ENCODE measurements at regions of chr20 and their contacts with region 1.

Region 1: DNA sequence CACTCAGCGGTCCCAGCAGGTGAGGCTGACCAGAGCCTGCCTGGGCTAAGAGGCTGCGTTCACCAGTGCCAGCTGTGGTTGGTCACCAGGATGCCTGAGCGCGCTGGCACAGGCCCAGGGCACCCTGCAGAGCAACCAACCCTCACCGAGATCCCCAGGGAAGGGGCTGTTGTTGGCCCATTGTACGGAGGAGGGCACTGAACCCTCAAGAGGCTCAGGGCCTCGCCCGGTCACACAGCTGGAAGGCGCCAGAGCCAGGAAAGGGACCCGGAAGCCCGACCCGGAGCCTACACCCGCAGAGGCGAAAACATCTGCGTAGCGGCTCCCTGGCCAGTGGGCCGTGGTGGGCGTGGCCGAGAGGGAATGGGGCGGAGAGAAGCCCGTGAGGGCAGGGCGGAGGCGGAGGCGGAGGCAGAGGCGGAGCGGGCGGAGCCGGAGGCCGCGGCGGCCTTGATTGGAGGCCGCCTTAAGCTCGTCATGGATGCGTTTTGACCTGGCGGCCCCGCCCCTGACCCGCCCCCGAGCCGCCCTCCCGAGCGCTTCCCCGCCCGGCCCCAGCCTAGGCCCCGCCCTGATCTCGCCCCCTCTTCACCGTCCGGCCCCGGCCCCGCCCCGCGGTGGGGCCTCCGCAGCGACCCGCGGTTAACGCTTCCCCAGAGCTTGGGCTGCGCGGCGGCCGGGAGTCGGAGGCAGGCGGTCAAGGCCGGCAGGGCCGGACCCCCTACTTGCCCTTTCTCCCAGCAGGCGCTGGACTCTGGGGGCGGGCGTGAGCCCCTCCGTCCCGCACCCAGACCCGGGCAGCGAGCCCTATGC is 2.2 kb upstream of the MRGBP start:
- DNase-seq: peak; percentile 96
- H3K4me3 Mint-ChIP-seq: peak overlapping the region; percentile 81
- H3K27ac Mint-ChIP-seq: peak overlapping the region; percentile 91
- H3K4me1 Mint-ChIP-seq: peaks cover 15% of the 10 kb centered on the region
- H3K27me3 Mint-ChIP-seq: peaks cover 9% of the 10 kb centered on the region

Region 2: GRCh38 chr20:62237801-62238571 is 556.1 kb before region 1 on chr20 and contains the start of gene OSBPL2:
- intact Hi-C with region 1: loop called (anchors 10 kb)
- DNase-seq: peak; percentile 100
- H3K4me3 Mint-ChIP-seq: peak within 1 kb of the TSS; percentile 85
- H3K27ac Mint-ChIP-seq: peak within 1 kb of the TSS; percentile 58
- H3K4me1 Mint-ChIP-seq: peaks cover 16% of the 10 kb centered on the region
- H3K27me3 Mint-ChIP-seq: no peaks in the 10 kb centered on the region
- total RNA-seq, gene OSBPL2: 27.0 and 31.6 TPM in 2 replicates

Region 3: GRCh38 chr20:62500237-62500864 is 293.8 kb before region 1 on chr20:
- intact Hi-C with region 1: loop called (anchors 1 kb)
- DNase-seq: peak; percentile 70
- H3K4me3 Mint-ChIP-seq: no peak overlapping the region
- H3K27ac Mint-ChIP-seq: peak overlapping the region; percentile 89
- H3K4me1 Mint-ChIP-seq: peaks cover 26% of the 10 kb centered on the region
- H3K27me3 Mint-ChIP-seq: no peaks in the 10 kb centered on the region

Region 4: GRCh38 chr20:62652051-62652926 is 141.8 kb before region 1 on chr20:
- intact Hi-C with region 1: loop called (anchors 1 kb)
- DNase-seq: peak; percentile 63
- H3K4me3 Mint-ChIP-seq: peak overlapping the region; percentile 76
- H3K27ac Mint-ChIP-seq: peak overlapping the region; percentile 94
- H3K4me1 Mint-ChIP-seq: peaks cover 37% of the 10 kb centered on the region
- H3K27me3 Mint-ChIP-seq: no peaks in the 10 kb centered on the region

Region 5: DNA sequence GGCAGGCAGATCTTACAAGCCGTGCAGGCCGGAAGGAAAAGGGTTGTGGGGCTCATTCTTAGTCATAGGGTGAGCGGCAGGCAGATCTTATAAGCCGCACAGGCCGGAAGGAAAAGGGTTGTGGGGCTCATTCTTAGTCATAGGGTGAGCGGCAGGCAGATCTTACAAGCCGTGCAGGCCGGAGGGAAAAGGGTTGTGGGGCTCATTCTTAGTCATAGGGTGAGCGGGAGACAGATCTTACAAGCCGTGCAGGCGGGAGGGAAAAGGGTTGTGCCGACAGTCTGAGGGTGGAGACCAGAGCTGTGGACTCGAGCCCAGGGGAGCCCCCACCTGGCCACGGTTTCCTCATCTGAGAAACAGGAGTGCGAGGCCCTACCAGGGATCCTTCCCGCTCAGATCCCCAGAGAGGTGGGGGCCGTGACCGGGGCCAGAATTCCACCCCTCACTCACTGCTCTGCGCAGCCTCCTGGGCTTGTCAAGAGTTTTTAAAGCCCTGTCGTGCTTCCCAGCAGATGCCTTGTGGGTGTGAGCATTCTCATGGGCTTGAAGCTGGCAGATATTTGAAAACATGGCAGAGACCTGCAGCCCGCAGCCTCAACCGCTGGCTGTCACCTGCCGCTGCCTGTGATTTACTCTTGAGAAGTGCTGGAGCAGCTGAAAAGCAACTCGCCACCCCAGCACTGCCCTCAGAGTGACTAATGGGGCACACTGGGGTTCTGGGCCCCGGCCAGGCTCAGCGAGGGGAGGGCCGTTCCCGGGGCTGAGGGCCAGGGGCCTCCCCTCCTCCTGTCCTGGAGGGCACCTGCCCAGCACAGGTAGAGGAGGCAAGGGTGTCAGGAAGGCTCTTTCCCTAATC is 53.6 kb before region 1 on chr20:
- intact Hi-C with region 1: loop called (anchors 1 kb)
- DNase-seq: peak; percentile 84
- H3K4me3 Mint-ChIP-seq: peak overlapping the region; percentile 65
- H3K27ac Mint-ChIP-seq: peak overlapping the region; percentile 80
- H3K4me1 Mint-ChIP-seq: peaks cover 31% of the 10 kb centered on the region
- H3K27me3 Mint-ChIP-seq: peaks cover 15% of the 10 kb centered on the region

Region 6: GRCh38 chr20:62926239-62927104 is 132.4 kb after region 1 on chr20 and contains the start of gene DIDO1:
- intact Hi-C with region 1: loop called (anchors 5 kb)
- DNase-seq: peak; percentile 88
- H3K4me3 Mint-ChIP-seq: peak within 1 kb of the TSS; percentile 91
- H3K27ac Mint-ChIP-seq: peak within 1 kb of the TSS; percentile 91
- H3K4me1 Mint-ChIP-seq: peaks cover 70% of the 10 kb centered on the region
- H3K27me3 Mint-ChIP-seq: no peaks in the 10 kb centered on the region
- total RNA-seq, gene DIDO1: 60.5 and 60.8 TPM in 2 replicates